ENCODE measurements at regions of chr10 and their contacts with region 1.

Region 1: GRCh38 chr10:34732926-34733325 is 82.2 kb downstream of the PARD3 start:
- DNase-seq: peak; percentile 52 to 62
- H3K4me3 ChIP-seq: no peak overlapping the region
- H3K4me3 Mint-ChIP-seq: no peak overlapping the region
- H3K27ac Mint-ChIP-seq: peak overlapping the region; percentile 71
- H3K4me1 ChIP-seq: peaks cover 74% of the 10 kb centered on the region
- H3K4me1 Mint-ChIP-seq: peaks cover 62% of the 10 kb centered on the region
- H3K27me3 ChIP-seq: no peaks in the 10 kb centered on the region
- H3K27me3 Mint-ChIP-seq: no peaks in the 10 kb centered on the region
- CTCF ChIP-seq: peak in 1 of 2 experiments; percentile 20

Region 2: DNA sequence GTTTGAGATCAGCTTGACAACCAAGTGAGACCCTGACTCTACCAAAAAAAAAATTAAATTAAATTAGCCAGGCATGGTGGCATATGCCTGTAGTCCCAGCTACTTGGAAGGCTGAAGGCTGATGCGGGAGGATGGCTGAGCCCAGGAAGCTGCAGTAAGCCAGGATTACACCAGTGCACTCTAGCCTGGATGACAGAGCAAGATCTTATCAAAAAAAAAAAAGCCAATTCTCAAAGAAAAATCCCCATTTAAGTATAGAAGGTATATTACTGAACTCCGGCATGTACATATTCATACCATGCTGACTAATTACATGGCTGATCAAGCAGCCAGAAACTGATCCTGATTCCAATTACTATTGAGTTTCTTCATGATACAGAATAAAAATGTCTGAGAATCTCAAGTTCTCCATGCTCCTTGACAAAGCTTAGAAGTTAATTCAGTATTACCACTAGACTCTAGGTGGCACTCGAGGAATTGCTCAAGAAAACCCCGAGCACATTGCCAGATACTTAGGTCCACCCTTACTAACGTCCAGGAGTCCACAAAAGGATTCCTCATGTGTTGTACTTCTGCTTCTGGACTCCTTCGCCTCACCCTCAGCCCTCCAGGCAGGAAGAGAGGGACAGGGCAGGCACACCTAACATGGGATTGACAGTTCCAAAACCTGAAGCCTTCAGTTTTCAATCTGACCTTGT is 66.8 kb before region 1 on chr10:
- CTCF ChIA-PET with region 1: interaction called, 8 read pairs
- POLR2A ChIA-PET with region 1: no interaction called
- intact Hi-C with region 1: loop called (anchors 5 kb)
- DNase-seq: peak; percentile 62 to 65
- H3K4me3 ChIP-seq: no peak overlapping the region
- H3K4me3 Mint-ChIP-seq: no peak overlapping the region
- H3K27ac Mint-ChIP-seq: peak overlapping the region; percentile 26
- H3K4me1 ChIP-seq: peaks cover 15% of the 10 kb centered on the region
- H3K4me1 Mint-ChIP-seq: peaks cover 29% of the 10 kb centered on the region
- H3K27me3 ChIP-seq: no peaks in the 10 kb centered on the region
- H3K27me3 Mint-ChIP-seq: no peaks in the 10 kb centered on the region
- CTCF ChIP-seq: peak; percentile 26 to 63

Region 3: GRCh38 chr10:34681933-34682332 is 51.0 kb before region 1 on chr10:
- CTCF ChIA-PET with region 1: interaction called, 4 read pairs
- POLR2A ChIA-PET with region 1: no interaction called
- intact Hi-C with region 1: loop called (anchors 5 kb)
- DNase-seq: no peak
- H3K4me3 ChIP-seq: no peak overlapping the region
- H3K4me3 Mint-ChIP-seq: no peak overlapping the region
- H3K27ac Mint-ChIP-seq: no peak overlapping the region
- H3K4me1 ChIP-seq: no peaks in the 10 kb centered on the region
- H3K4me1 Mint-ChIP-seq: peaks cover 11% of the 10 kb centered on the region
- H3K27me3 ChIP-seq: no peaks in the 10 kb centered on the region
- H3K27me3 Mint-ChIP-seq: no peaks in the 10 kb centered on the region
- CTCF ChIP-seq: no peak

Region 4: GRCh38 chr10:34789966-34790506 is 57.1 kb after region 1 on chr10:
- CTCF ChIA-PET with region 1: interaction called, 3 read pairs
- POLR2A ChIA-PET with region 1: no interaction called
- intact Hi-C with region 1: loop called (anchors 2 kb)
- DNase-seq: no peak
- H3K4me3 ChIP-seq: no peak overlapping the region
- H3K4me3 Mint-ChIP-seq: no peak overlapping the region
- H3K27ac Mint-ChIP-seq: no peak overlapping the region
- H3K4me1 ChIP-seq: peaks cover 9% of the 10 kb centered on the region
- H3K4me1 Mint-ChIP-seq: peaks cover 36% of the 10 kb centered on the region
- H3K27me3 ChIP-seq: no peaks in the 10 kb centered on the region
- H3K27me3 Mint-ChIP-seq: no peaks in the 10 kb centered on the region
- CTCF ChIP-seq: no peak

Region 5: DNA sequence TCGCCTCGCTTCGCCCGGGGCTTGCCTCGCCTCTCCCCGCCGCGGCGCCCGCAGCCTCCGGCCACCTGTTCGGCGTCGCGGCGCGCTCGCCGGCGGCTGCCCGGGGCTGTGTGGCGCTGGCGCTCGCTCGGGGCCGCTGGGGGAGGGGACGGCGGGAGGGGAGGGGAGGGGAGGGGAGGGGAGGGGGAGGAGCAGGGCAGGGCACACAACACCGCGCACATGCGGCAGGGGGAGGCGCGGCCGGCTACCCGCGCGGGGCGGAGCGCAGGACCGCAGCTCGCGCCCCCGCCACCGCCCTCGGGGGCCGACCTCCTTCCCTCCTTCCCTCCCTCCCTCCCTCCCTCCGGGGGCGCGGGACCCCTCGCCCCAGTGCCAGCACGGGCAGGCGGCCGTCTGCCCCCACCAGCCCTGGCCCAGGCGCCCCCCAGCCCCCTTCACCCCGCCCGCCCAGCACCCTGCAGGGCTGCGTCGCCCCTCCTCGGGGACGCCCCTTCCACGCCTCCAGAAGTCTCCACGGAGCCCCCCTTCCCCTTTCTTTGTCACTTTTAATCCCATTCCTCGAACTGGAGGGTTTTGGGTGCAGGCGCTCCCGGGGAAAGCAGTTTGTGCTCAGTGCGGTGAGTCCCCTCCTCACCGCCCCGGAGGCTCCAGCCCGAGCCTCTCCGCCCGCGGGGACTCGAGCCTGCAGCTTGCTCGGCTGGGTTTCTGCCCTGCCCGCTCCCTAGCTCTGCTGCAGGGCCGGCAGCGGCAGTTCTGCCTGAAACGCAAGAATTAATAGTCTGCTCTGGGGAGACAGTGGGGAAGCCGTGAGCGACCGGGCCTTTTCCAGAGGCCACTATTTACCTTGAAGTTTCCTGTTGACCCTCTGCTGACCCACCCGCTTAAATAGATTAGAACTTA is 82.5 kb after region 1 on chr10 and contains the start of gene PARD3:
- CTCF ChIA-PET with region 1: interaction called, 10 read pairs
- POLR2A ChIA-PET with region 1: no interaction called
- intact Hi-C with region 1: loop called (anchors 2 kb)
- DNase-seq: peak; percentile 80 to 82
- H3K4me3 ChIP-seq: peak within 1 kb of the TSS; percentile 92
- H3K4me3 Mint-ChIP-seq: peak within 1 kb of the TSS; percentile 79
- H3K27ac Mint-ChIP-seq: peak within 1 kb of the TSS; percentile 40
- H3K4me1 ChIP-seq: peaks cover 11% of the 10 kb centered on the region; the same call in 1 of the 2 replicates
- H3K4me1 Mint-ChIP-seq: peaks cover 36% of the 10 kb centered on the region
- H3K27me3 ChIP-seq: no peaks in the 10 kb centered on the region
- H3K27me3 Mint-ChIP-seq: no peaks in the 10 kb centered on the region
- CTCF ChIP-seq: peak in 1 of 2 experiments; percentile 19
- total RNA-seq, gene PARD3: 74.9 and 80.7 TPM in 2 replicates

Measured in Caco-2 (cell line).